Activated B cell treated with CpG ODN at 0.5 μM for 24 hours (primary cell): ENCODE measurements at regions of chr12 and their contacts with region 1.

Region 1: GRCh38 chr12:92649511-92650227 is 53.1 kb upstream of the PLEKHG7 start:
- DNase-seq: no peak
- ATAC-seq: peak; percentile 78
- H3K4me3 Mint-ChIP-seq: no peak overlapping the region
- H3K27ac Mint-ChIP-seq: no peak overlapping the region
- H3K4me1 Mint-ChIP-seq: peaks cover 6% of the 10 kb centered on the region
- H3K27me3 Mint-ChIP-seq: no peaks in the 10 kb centered on the region
- CTCF ChIP-seq: peak; percentile 26

Region 2: DNA sequence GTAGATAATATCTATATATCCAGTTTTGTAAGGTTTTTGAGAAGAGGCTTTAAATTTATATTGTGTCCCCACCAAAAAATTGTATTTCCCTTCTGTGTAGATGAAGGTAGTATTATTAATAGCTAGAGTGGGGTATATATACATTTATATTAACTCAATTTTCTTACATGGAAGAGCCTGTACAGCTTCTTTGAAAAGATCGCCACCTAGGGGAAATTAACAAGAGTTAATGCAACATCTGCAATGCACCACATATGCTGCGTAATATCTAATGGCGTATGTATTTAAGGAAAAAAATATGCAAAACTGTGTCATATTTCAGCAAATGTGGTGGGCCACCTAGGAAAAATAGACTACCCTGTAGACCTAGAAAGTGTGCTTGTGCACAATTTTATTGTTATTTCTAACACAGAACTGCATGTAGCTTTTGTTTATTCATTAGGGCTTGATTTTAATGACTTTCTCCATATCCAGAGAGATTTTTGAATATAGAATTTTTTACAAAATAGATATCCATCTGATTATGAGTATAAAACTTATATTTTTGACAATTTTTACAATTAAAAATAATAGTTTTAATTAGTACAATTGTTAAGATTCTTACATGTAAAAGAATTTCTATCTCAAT is 1708.7 kb before region 1 on chr12:
- CTCF ChIA-PET with region 1: no interaction called
- POLR2A ChIA-PET with region 1: no interaction called
- intact Hi-C with region 1: loop called (anchors 2 kb)
- DNase-seq: no peak
- ATAC-seq: peak; percentile 28
- H3K4me3 Mint-ChIP-seq: no peak overlapping the region
- H3K27ac Mint-ChIP-seq: no peak overlapping the region
- H3K4me1 Mint-ChIP-seq: no peaks in the 10 kb centered on the region
- H3K27me3 Mint-ChIP-seq: peaks cover 12% of the 10 kb centered on the region
- CTCF ChIP-seq: peak; percentile 36

Region 3: DNA sequence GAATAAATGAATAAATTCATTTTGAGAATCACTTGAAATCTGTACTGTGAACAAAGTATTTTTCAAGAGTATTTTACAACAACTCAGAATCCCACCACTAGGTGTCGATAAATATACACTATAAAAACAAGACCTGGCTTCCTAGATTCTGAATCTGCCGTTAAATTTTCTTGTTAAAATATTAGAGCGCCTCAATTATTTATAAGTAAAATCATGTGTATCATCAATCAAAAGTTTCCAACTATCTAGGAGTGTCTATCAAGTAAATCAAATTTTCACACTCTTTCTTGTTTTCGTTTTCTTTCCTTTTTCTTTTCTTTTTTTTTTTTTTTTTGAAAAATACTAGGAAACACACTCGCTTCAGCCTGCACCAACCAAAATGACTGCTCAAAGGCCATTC is 1287.8 kb before region 1 on chr12:
- CTCF ChIA-PET with region 1: interaction called, 12 read pairs
- POLR2A ChIA-PET with region 1: interaction called, 3 read pairs
- intact Hi-C with region 1: loop called (anchors 1 kb)
- DNase-seq: no peak
- ATAC-seq: no peak
- H3K4me3 Mint-ChIP-seq: no peak overlapping the region
- H3K27ac Mint-ChIP-seq: no peak overlapping the region
- H3K4me1 Mint-ChIP-seq: peaks cover 8% of the 10 kb centered on the region
- H3K27me3 Mint-ChIP-seq: peaks cover 1% of the 10 kb centered on the region
- CTCF ChIP-seq: no peak

Region 4: DNA sequence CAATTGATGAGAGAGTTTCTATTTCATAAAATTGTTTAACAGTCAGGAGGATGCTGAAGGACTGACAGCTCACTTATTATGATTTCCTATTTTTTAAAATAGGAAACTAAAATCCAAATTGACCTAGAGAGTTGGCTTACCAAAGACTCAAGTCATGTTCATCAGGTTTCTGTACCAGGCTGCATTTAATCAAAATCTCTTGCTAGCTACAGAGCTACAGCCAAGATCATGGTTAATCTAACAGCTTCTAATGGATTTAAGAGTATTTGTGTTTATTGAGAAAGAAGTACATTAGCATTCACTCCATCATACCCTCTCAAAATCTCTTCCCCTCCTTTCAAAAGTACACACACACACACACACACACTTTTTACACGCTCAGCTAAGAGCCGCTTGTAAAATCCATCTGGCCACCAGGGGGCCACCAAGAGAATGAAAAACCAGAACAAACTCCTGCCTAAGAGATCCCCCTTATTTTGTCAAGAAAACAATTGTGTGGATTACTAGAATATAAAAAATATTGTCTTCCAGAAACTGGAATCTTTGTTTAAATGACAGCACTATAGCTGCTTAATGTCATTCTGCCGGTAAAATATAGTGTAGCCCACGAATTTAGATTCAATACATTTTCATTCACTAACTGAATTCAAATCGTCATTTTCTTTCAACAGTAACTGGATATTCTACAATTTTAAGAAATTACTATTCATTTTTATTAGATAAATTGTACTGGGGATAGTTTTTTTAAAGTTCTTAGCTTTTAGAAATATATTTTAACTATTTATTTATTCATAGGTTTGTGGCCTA is 838.0 kb before region 1 on chr12:
- CTCF ChIA-PET with region 1: interaction called, 10 read pairs
- POLR2A ChIA-PET with region 1: no interaction called
- intact Hi-C with region 1: loop called (anchors 1 kb)
- DNase-seq: peak; percentile 57
- ATAC-seq: peak; percentile 71
- H3K4me3 Mint-ChIP-seq: no peak overlapping the region
- H3K27ac Mint-ChIP-seq: no peak overlapping the region
- H3K4me1 Mint-ChIP-seq: peaks cover 7% of the 10 kb centered on the region
- H3K27me3 Mint-ChIP-seq: no peaks in the 10 kb centered on the region
- CTCF ChIP-seq: no peak

Region 5: GRCh38 chr12:92396647-92397252 is 252.9 kb before region 1 on chr12:
- CTCF ChIA-PET with region 1: no interaction called
- POLR2A ChIA-PET with region 1: no interaction called
- intact Hi-C with region 1: loop called (anchors 5 kb)
- DNase-seq: no peak
- ATAC-seq: no peak
- H3K4me3 Mint-ChIP-seq: no peak overlapping the region
- H3K27ac Mint-ChIP-seq: peak overlapping the region; percentile 93
- H3K4me1 Mint-ChIP-seq: peaks cover 70% of the 10 kb centered on the region
- H3K27me3 Mint-ChIP-seq: no peaks in the 10 kb centered on the region
- CTCF ChIP-seq: no peak

Region 6: GRCh38 chr12:92827836-92828431 is 178.3 kb after region 1 on chr12:
- CTCF ChIA-PET with region 1: no interaction called
- POLR2A ChIA-PET with region 1: no interaction called
- intact Hi-C with region 1: no loop called
- DNase-seq: no peak
- ATAC-seq: no peak
- H3K4me3 Mint-ChIP-seq: no peak overlapping the region
- H3K27ac Mint-ChIP-seq: no peak overlapping the region
- H3K4me1 Mint-ChIP-seq: no peaks in the 10 kb centered on the region
- H3K27me3 Mint-ChIP-seq: no peaks in the 10 kb centered on the region
- CTCF ChIP-seq: no peak